Activated T-helper 1 cell treated with anti-CD3 and anti-CD28 coated beads, Interleukin-12 subunit alpha, Interleukin-12 subunit beta, Interleukin-2, Interleukin-4 antibody, amounts not matched to agents 30 ng/mL and 10 ng/mL and 1 ng/mL, durations not matched to agents 14 hours and 24 hours and 36 hours (primary cell): ENCODE measurements at regions of chr11 and their contacts with region 1.

Region 1: GRCh38 chr11:124673333-124674167 is at the starts of genes SIAE and SPA17:
- DNase-seq: peak; percentile 86
- H3K4me3 Mint-ChIP-seq: peak within 1 kb of the TSS; percentile 89
- H3K27ac Mint-ChIP-seq: peak within 1 kb of the TSS; percentile 89
- H3K4me1 Mint-ChIP-seq: peaks cover 29% of the 10 kb centered on the region
- H3K27me3 Mint-ChIP-seq: peaks cover 5% of the 10 kb centered on the region
- total RNA-seq, gene SIAE: 4.9 and 5.2 TPM in 2 replicates
- total RNA-seq, gene SPA17: 1.7 and 2.4 TPM in 2 replicates

Region 2: DNA sequence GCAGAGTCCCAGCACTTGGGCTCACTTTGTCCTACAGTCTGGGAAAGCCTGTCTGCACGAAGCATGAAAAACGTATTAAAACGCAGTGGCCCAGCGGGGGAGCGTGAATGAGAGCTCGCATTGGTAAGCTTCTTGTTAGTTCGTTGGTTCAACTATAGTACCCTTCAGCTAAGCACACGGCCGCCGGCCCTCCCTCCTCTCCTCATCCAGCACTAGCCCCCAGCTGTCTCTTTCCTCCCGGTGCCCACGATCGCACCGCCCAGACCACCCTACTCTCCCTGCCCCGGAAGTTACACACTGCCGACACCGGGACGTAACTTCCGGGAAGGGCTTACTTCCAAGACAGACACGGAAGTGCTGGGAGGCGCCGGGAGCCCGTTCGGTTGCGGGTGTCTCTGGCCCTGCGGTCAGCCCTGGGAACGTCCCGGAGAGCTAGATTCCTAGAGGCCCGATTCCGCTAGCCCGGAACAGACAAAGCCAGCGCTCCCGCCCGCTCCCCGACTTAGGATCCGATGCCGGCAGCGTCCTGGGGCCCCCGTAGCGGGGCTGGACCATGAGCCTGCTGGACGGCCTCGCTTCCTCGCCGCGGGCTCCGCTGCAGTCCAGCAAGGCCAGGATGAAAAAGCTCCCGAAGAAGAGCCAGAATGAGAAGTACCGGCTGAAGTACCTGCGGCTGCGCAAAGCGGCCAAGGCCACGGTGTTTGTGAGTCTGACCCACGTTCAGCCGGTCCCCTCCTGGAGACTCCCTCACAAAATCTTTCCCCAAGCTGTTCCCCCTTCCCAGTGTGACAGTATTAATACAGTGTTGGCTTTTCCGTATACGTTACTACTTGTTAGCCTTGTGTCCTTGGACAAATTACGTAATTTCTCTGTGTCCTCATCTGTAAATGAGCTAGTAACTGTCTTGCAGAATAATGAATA is 50.8 kb before region 1 on chr11 and contains the start of gene TBRG1:
- intact Hi-C with region 1: loop called (anchors 1 kb)
- DNase-seq: peak; percentile 80
- H3K4me3 Mint-ChIP-seq: peak within 1 kb of the TSS; percentile 97
- H3K27ac Mint-ChIP-seq: peak within 1 kb of the TSS; percentile 95
- H3K4me1 Mint-ChIP-seq: peaks cover 29% of the 10 kb centered on the region
- H3K27me3 Mint-ChIP-seq: peaks cover 14% of the 10 kb centered on the region
- total RNA-seq, gene TBRG1: 35.1 and 35.4 TPM in 2 replicates

Region 3: DNA sequence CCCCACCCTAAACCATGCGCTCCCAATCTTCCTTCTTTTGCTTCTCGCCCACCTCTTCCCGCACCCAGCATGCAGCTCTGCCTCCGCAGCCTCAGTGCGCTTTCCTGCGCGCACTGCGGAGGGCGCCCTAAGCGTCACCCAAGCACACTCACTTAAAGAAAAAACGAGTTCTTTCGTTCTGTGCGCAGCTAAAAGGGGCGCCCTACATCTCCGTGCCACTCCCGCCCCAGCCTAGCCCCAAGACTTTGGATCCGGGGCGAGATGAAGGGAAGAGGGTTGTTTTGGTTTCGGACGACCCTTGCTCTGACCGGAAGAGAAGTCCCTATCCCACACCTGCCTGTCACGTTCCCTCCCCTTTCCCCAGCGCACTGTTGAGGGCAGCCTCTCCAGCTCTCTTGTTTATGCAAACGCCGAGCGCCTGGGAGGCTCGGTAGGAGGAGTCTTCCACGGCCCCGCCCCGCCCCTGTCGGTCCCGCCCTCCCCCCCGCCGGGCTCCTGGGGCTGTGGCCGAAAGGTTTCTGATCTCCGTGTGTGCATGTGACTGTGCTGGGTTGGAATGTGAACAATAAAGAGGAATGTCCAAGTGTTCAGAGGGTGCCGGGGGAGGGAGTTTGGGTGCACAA is 73.2 kb after region 1 on chr11:
- intact Hi-C with region 1: loop called (anchors 1 kb)
- DNase-seq: peak; percentile 64
- H3K4me3 Mint-ChIP-seq: peak overlapping the region; percentile 89
- H3K27ac Mint-ChIP-seq: peak overlapping the region; percentile 86
- H3K4me1 Mint-ChIP-seq: peaks cover 28% of the 10 kb centered on the region
- H3K27me3 Mint-ChIP-seq: peaks cover 12% of the 10 kb centered on the region

Region 4: DNA sequence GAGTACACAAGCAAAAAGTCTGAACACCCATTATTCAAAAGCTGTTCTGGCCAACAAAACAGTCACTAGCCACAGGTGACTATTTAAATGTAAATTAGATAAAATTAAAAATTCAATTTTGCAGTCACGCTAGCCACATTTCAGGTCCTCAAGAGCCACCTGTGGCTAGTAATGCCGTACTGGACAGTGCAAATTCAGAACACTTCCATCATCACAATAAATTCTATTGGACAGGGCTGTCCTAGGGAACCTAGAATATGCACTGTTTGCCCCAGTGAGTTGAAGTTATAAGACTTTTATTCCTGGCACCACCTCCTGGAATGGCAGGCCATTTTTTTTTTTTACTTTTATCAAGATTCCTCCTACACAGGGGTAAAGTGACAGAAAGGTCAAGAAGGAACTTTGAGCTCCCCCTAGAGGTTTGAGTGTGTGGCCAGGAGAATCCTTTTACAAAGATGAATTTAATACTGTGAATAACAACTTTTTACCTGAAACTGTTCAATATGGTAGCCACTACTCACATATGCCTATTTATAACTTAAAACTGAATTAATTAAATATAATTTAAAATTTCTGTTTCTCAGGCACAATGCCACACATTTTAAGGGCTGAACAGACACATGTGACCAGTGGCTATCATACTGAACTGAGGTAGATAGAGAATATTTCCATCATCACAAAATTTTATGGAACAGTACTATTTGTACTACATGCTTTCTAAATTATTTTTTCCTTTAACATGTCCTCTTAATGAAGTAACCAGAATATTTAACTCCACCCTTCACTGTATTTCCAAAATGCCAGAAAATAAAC is 120.1 kb after region 1 on chr11:
- intact Hi-C with region 1: loop called (anchors 1 kb)
- DNase-seq: peak; percentile 3
- H3K4me3 Mint-ChIP-seq: no peak overlapping the region
- H3K27ac Mint-ChIP-seq: no peak overlapping the region
- H3K4me1 Mint-ChIP-seq: peaks cover 36% of the 10 kb centered on the region
- H3K27me3 Mint-ChIP-seq: no peaks in the 10 kb centered on the region

Region 5: GRCh38 chr11:124837491-124837856 is 163.9 kb after region 1 on chr11:
- intact Hi-C with region 1: loop called (anchors 1 kb)
- DNase-seq: no peak
- H3K4me3 Mint-ChIP-seq: no peak overlapping the region
- H3K27ac Mint-ChIP-seq: no peak overlapping the region
- H3K4me1 Mint-ChIP-seq: peaks cover 17% of the 10 kb centered on the region
- H3K27me3 Mint-ChIP-seq: peaks cover 59% of the 10 kb centered on the region

Region 6: DNA sequence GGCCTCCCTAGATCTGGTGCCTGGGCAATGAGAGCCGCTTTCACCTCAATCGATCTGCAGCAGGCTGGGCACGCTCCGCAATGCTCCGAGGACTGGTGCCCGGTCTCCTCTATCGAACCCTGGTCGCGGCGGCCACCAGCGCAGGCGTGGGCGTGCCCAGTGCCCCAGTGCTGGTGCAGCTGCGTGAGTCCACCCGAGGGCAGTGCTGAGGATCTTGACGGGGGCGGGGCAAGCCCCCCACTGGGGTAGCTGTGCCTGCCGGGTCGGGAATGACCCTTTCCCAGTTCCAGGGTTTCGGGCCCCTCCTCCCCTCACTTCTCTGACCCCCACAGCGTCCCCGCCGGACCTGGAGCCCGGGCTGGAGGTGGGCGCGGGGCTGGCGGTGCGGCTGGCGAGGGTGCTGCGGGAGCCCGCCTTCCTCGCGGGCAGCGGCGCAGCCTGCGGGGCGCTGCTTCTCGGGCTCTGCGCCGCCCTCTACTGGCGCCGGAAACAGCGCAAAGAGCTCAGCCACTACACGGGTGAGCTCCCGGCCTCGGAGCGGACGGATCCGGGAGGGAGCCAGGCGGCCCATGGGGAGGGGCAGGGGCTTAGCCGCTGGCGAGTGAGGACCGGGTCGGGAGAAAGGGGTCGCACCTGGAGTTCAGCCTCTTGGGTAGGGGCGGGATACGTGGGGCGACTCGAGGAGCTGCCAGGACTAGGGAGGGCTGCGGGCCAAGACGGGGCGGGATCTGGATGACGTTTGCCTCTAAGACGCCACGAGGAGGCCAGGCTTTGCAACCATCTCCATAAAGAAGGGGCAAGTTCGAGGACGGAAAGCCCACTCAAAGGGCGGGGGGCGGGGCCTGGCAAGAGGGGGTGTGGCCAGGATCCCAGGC is 202.6 kb after region 1 on chr11:
- intact Hi-C with region 1: loop called (anchors 1 kb)
- DNase-seq: peak; percentile 73
- H3K4me3 Mint-ChIP-seq: peak overlapping the region; percentile 81
- H3K27ac Mint-ChIP-seq: peak overlapping the region; percentile 72
- H3K4me1 Mint-ChIP-seq: peaks cover 12% of the 10 kb centered on the region
- H3K27me3 Mint-ChIP-seq: peaks cover 46% of the 10 kb centered on the region